Breast epithelium (tissue), 4 donors: ENCODE measurements at regions of chr3 and their contacts with region 1.

Region 1: DNA sequence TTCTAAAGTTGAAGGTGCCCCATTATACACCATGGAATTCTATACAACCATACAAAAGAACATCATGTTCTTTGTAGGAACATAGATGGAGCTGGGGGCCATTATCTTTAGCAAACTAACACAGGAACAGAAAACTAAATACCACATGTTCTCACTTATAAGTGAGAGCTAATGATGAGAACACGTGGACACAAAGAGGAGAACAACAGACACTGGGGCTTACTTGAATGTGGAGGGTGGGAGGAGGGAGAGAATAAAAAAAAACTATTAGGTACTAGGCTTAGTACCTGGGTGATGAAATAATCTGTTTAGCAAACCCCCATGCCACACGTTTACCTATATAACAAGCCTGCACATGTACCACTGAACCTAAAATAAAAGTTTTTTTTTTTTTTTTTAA is 342.7 kb downstream of the PLCL2 start:
- DNase-seq: no peak
- H3K4me3 ChIP-seq: no peak overlapping the region
- H3K27ac ChIP-seq: no peak overlapping the region
- H3K4me1 ChIP-seq: no peaks in the 10 kb centered on the region
- H3K27me3 ChIP-seq: no peaks in the 10 kb centered on the region
- CTCF ChIP-seq: no peak
- POLR2A ChIP-seq: no peak

Region 2: GRCh38 chr3:16362770-16363169 is 864.7 kb before region 1 on chr3:
- intact Hi-C with region 1: loop called (anchors 5 kb)
- DNase-seq: no peak
- H3K4me3 ChIP-seq: no peak overlapping the region
- H3K27ac ChIP-seq: no peak overlapping the region
- H3K4me1 ChIP-seq: no peaks in the 10 kb centered on the region
- H3K27me3 ChIP-seq: no peaks in the 10 kb centered on the region
- CTCF ChIP-seq: no peak
- POLR2A ChIP-seq: no peak

Region 3: DNA sequence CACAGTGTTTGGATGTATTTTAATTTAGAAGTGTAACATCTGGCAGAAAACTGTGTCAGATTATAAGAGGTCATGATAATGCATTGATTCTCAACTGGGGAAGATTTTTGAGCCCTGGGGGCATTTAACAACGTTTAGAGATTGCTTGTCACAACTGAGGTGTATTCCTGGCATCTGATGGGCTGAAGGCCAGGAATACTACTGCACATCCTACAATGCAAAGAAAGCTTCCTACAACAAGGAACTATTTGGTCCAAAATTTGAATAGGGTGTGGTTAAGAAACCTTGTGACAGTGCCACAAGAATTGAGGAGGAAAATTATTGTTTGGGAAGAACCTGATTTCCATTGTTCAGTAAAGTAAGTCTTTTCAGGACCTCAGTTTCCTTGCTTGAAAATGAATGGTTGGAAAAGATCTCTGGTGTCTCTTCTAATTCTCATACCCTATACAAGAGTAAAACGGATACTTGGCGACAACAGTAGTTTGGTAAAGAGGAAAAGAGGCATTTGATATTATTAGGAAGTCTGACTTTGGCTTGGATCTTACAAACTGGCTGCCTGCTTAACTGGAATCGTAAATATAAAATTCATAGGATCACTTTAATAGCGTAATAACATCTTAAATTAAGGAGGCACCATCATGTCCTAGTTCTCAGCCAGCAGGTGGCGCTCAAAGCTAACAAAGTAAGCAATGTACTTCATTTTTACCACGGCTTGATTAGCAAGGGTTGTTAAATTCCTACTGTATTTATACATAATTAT is 626.5 kb before region 1 on chr3:
- intact Hi-C with region 1: no loop called
- DNase-seq: peak; percentile 62 to 75
- H3K4me3 ChIP-seq: no peak overlapping the region
- H3K27ac ChIP-seq: no peak overlapping the region
- H3K4me1 ChIP-seq: no peaks in the 10 kb centered on the region
- H3K27me3 ChIP-seq: no peaks in the 10 kb centered on the region
- CTCF ChIP-seq: peak; percentile 54 to 78 (median 67)
- POLR2A ChIP-seq: no peak